ENCODE measurements at regions of chr14 and their contacts with region 1.

Region 1: DNA sequence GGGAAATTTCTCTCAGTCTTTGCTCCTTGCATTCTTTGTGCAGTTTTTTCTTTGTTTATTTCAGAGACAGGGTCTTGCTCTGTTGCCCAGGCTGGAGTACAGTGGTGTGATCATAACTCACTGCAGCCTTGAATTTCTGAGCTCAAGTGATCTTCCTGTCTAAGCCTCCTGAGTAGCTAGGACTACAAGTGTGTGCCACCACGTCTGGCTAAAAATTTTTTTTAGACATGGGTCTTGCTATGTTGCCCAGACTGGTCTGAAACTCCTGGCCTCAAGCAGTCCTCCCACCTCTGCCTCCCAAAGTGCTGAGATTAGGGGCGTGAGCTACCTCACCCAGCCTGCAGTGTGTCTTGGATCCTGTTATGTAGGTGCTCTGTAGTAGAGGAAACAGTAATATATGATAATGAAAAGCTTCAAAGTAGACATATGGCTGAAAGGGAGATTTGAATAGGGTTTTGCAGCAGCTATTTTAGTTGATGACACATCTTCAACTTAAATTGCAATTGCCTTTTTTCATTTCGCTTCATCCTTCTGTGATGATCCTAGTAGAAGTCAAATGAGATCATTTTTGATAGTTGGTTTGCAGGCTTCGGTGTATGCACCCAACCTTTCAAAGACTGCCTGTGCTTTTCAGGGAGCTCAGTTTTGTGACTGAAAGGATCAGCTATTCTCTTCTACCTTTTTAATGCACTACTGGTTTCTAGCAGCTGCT is 75.4 kb downstream of the FUT8 start:
- DNase-seq: no peak
- ATAC-seq: no peak
- H3K4me3 ChIP-seq: no peak overlapping the region
- H3K4me3 Mint-ChIP-seq: no peak overlapping the region
- H3K27ac ChIP-seq: no peak overlapping the region
- H3K27ac Mint-ChIP-seq: no peak overlapping the region
- H3K4me1 ChIP-seq: no peaks in the 10 kb centered on the region
- H3K4me1 Mint-ChIP-seq: peaks cover 47 to 60% (median 58%) of the 10 kb centered on the region in 3 donors
- H3K27me3 ChIP-seq: no peaks in the 10 kb centered on the region
- H3K27me3 Mint-ChIP-seq: no peaks in the 10 kb centered on the region

Region 2: GRCh38 chr14:65915125-65915524 is 427.2 kb after region 1 on chr14:
- CTCF ChIA-PET with region 1: interaction called in 1 of 2 experiments, 13 read pairs
- POLR2A ChIA-PET with region 1: no interaction called
- DNase-seq: no peak
- ATAC-seq: peak in 2 of 4 experiments; percentile 52 to 57
- H3K4me3 ChIP-seq: no peak overlapping the region
- H3K4me3 Mint-ChIP-seq: no peak overlapping the region
- H3K27ac ChIP-seq: no peak overlapping the region
- H3K27ac Mint-ChIP-seq: peak overlapping the region in 1 of 2 donors; percentile 5
- H3K4me1 ChIP-seq: peaks cover 0 to 3% of the 10 kb centered on the region in 2 experiments
- H3K4me1 Mint-ChIP-seq: peaks cover 35 to 57% (median 44%) of the 10 kb centered on the region in 3 donors
- H3K27me3 ChIP-seq: no peaks in the 10 kb centered on the region
- H3K27me3 Mint-ChIP-seq: no peaks in the 10 kb centered on the region